ENCODE measurements at regions of chr15 and their contacts with region 1.

Region 1: DNA sequence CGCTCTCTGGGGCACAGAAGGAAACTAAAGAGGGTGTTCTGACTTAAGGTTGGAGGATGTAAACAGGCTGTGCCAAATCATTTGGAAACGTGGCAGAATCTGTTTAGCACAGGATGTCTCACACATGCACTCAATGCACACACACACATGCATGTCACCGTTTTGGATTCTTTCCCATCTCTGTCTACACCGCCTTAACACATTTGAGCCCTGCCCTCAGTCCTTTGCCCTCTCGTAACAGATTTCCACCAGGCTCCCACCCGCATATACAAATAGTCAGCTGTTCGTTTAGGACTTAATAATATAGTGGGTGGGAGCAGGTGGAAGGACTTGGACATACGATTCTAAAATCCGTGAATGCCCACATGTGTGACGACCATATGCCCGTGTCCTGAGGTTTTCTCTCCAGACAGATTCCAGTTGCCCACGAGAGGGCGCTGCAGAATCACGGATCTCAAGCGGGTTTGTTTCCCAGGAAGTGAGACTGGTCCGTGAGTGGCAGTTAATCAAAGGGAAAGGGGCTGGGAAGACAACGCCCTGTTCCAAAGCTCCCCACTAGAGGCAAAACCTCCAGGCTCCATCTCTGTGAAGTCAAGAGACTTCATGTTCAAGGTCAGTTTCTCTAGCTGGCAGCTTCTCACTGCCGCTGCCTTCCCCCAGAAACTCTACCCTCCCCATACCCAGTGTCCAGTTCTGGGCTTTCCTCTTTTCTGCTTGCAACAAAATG is 44.5 kb downstream of the NOX5 start:
- DNase-seq: no peak
- H3K4me3 ChIP-seq: no peak overlapping the region
- H3K27ac ChIP-seq: no peak overlapping the region
- H3K4me1 ChIP-seq: peaks cover 8% of the 10 kb centered on the region
- H3K27me3 ChIP-seq: no peaks in the 10 kb centered on the region
- CTCF ChIP-seq: peak; percentile 79 to 96 (median 90)
- POLR2A ChIP-seq: no peak

Region 2: DNA sequence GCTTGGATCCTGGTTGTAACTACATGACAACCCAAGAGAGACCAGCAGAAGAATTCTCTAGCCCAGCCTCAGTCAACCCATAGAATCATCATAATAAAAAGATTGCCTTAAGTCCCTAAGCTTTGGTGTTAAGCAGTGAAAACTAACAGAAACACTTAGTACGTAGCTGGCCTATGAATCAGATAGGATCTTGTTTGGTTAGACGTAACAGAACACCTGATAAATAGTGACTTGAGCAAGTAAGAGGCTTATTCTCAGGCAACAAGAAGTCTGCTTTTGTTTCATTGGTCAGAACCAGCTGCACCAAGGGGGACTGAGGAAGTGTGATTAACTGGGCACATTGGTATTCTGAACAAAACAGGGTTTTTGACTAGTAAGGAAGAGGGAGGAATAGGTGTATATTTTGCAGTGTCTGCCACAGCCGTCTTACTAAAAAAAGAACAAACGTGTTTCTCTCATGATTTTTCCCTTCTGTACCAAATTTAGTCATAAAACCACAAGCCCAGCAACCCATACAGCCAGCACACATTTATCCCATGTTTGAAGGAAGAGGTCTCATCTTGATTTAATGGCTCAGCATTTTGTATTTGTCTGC is 48.1 kb after region 1 on chr15:
- intact Hi-C with region 1: loop called (anchors 2 kb)
- DNase-seq: no peak
- H3K4me3 ChIP-seq: no peak overlapping the region
- H3K27ac ChIP-seq: no peak overlapping the region
- H3K4me1 ChIP-seq: no peaks in the 10 kb centered on the region
- H3K27me3 ChIP-seq: no peaks in the 10 kb centered on the region
- CTCF ChIP-seq: no peak
- POLR2A ChIP-seq: no peak

Region 3: GRCh38 chr15:69265347-69265955 is 206.5 kb after region 1 on chr15:
- intact Hi-C with region 1: loop called (anchors 10 kb)
- DNase-seq: no peak
- H3K4me3 ChIP-seq: no peak overlapping the region
- H3K27ac ChIP-seq: no peak overlapping the region
- H3K4me1 ChIP-seq: no peaks in the 10 kb centered on the region
- H3K27me3 ChIP-seq: no peaks in the 10 kb centered on the region
- CTCF ChIP-seq: peak; percentile 11 to 34 (median 20)
- POLR2A ChIP-seq: no peak

Region 4: GRCh38 chr15:69394556-69395282 is 335.7 kb after region 1 on chr15:
- intact Hi-C with region 1: loop called (anchors 5 kb)
- DNase-seq: no peak
- H3K4me3 ChIP-seq: no peak overlapping the region
- H3K27ac ChIP-seq: no peak overlapping the region
- H3K4me1 ChIP-seq: peaks cover 15% of the 10 kb centered on the region
- H3K27me3 ChIP-seq: no peaks in the 10 kb centered on the region
- CTCF ChIP-seq: peak; percentile 90 to 97 (median 92)
- POLR2A ChIP-seq: no peak

Measured in vagina (tissue), 2 donors.